Psoas muscle (tissue), 8 donors: ENCODE measurements at regions of chr7 and their contacts with region 1.

Region 1: GRCh38 chr7:89064831-89065483 is 269.4 kb upstream of the TEX47 start:
- DNase-seq: no peak
- ATAC-seq: no peak
- H3K4me3 ChIP-seq: no peak overlapping the region
- H3K27ac ChIP-seq: no peak overlapping the region
- H3K4me1 ChIP-seq: no peaks in the 10 kb centered on the region
- H3K27me3 ChIP-seq: no peaks in the 10 kb centered on the region
- CTCF ChIP-seq: no peak

Region 2: DNA sequence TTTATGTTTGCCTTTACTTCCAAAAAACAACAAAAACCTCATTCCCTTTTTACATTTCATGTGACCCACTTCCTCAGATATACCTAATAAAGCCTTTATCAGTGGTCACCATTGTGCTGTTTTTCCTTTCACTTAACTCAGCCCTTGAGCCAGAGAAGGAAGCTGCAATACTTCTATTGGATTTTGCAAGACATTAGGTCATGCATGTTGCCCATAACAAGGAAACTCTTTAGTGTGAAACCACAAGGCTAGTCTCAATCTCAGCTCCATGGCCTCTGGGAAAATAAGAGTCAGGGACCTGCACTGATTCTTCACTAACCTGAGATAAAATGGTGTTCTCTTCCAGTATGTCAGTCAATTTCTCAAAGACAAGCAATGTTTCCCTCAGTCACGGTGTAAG is 786.1 kb before region 1 on chr7:
- intact Hi-C with region 1: no loop called
- DNase-seq: no peak
- ATAC-seq: peak in 1 of 4 donors; percentile 36
- H3K4me3 ChIP-seq: no peak overlapping the region
- H3K27ac ChIP-seq: no peak overlapping the region
- H3K4me1 ChIP-seq: no peaks in the 10 kb centered on the region
- H3K27me3 ChIP-seq: no peaks in the 10 kb centered on the region
- CTCF ChIP-seq: no peak

Region 3: DNA sequence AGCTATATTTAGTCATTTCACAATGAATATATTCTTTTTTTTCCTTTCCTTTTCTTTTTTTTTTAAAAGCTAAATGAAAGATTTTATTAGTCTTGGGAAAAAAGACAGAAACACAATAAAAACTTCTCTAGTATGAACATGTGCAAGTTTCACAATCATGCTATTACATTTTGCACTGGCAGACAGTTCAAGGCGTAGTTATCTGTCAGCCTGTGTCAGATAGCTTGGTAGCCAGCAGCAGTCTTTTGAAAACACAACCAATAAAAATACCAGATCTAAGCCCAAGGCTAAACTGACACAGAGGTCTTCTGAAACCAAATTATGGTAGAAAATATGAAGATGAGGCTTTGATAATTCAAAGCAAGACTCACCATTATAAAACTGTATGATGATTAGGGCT is 63.7 kb before region 1 on chr7:
- intact Hi-C with region 1: loop called in 1 of 2 experiments (anchors 2 kb)
- DNase-seq: no peak
- ATAC-seq: no peak
- H3K4me3 ChIP-seq: no peak overlapping the region
- H3K27ac ChIP-seq: no peak overlapping the region
- H3K4me1 ChIP-seq: no peaks in the 10 kb centered on the region
- H3K27me3 ChIP-seq: no peaks in the 10 kb centered on the region
- CTCF ChIP-seq: no peak

Region 4: DNA sequence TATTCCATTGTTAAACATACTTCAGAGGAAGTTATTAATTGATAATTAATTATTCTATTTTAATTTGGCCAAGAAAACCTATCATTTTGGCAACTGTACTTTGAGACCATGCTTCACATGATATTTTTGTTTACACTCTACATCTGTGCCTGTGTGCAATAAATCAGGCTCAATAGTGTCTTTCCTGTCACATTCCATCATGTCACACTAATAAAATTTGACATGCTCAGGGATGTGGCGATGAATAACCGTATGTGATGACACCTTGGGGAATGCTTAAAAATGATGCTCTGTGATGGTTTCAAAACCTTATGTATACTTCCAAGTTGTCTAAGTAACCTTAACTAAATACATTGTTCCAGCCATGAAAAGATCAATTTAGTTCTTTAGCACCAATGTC is 95.2 kb after region 1 on chr7:
- intact Hi-C with region 1: no loop called
- DNase-seq: no peak
- ATAC-seq: no peak
- H3K4me3 ChIP-seq: no peak overlapping the region
- H3K27ac ChIP-seq: no peak overlapping the region
- H3K4me1 ChIP-seq: no peaks in the 10 kb centered on the region
- H3K27me3 ChIP-seq: no peaks in the 10 kb centered on the region
- CTCF ChIP-seq: no peak